ENCODE measurements at regions of chr4 and their contacts with region 1.

Region 1: GRCh38 chr4:147943159-147943638 is 211.3 kb downstream of the ARHGAP10 start:
- DNase-seq: peak in 1 of 2 donors; percentile 51
- ATAC-seq: peak; percentile 46 to 70 (median 55)
- H3K4me3 ChIP-seq: peak overlapping the region; percentile 20
- H3K4me3 Mint-ChIP-seq: peak overlapping the region; percentile 64
- H3K27ac ChIP-seq: peak overlapping the region; percentile 81
- H3K27ac Mint-ChIP-seq: peak overlapping the region; percentile 60 to 78
- H3K4me1 ChIP-seq: peaks cover 11% of the 10 kb centered on the region
- H3K4me1 Mint-ChIP-seq: peaks cover 44 to 56% of the 10 kb centered on the region in 2 donors
- H3K27me3 ChIP-seq: no peaks in the 10 kb centered on the region
- H3K27me3 Mint-ChIP-seq: no peaks in the 10 kb centered on the region
- CTCF ChIP-seq: no peak

Region 2: GRCh38 chr4:147799986-147800555 is 143.1 kb before region 1 on chr4:
- intact Hi-C with region 1: loop called (anchors 10 kb)
- DNase-seq: peak; percentile 54 to 89
- ATAC-seq: peak; percentile 93 to 97 (median 94)
- H3K4me3 ChIP-seq: no peak overlapping the region
- H3K4me3 Mint-ChIP-seq: peak overlapping the region; percentile 81
- H3K27ac ChIP-seq: peak overlapping the region; percentile 51
- H3K27ac Mint-ChIP-seq: peak overlapping the region; percentile 84 to 92
- H3K4me1 ChIP-seq: peaks cover 22% of the 10 kb centered on the region
- H3K4me1 Mint-ChIP-seq: peaks cover 52 to 55% of the 10 kb centered on the region in 2 donors
- H3K27me3 ChIP-seq: no peaks in the 10 kb centered on the region
- H3K27me3 Mint-ChIP-seq: peaks cover 17 to 27% of the 10 kb centered on the region in 2 donors
- CTCF ChIP-seq: no peak

Region 3: GRCh38 chr4:147924604-147925412 is 18.4 kb before region 1 on chr4:
- intact Hi-C with region 1: loop called (anchors 1 kb)
- DNase-seq: peak in 1 of 2 donors; percentile 31
- ATAC-seq: no peak
- H3K4me3 ChIP-seq: no peak overlapping the region
- H3K4me3 Mint-ChIP-seq: no peak overlapping the region
- H3K27ac ChIP-seq: no peak overlapping the region
- H3K27ac Mint-ChIP-seq: no peak overlapping the region
- H3K4me1 ChIP-seq: no peaks in the 10 kb centered on the region
- H3K4me1 Mint-ChIP-seq: peaks cover 0 to 5% of the 10 kb centered on the region in 2 donors
- H3K27me3 ChIP-seq: no peaks in the 10 kb centered on the region
- H3K27me3 Mint-ChIP-seq: no peaks in the 10 kb centered on the region
- CTCF ChIP-seq: no peak

Region 4: GRCh38 chr4:148056869-148057268 is 113.7 kb after region 1 on chr4:
- intact Hi-C with region 1: loop called (anchors 5 kb)
- DNase-seq: peak; percentile 41 to 74
- ATAC-seq: peak; percentile 77 to 85 (median 78)
- H3K4me3 ChIP-seq: no peak overlapping the region
- H3K4me3 Mint-ChIP-seq: peak overlapping the region; percentile 49
- H3K27ac ChIP-seq: peak overlapping the region; percentile 9
- H3K27ac Mint-ChIP-seq: peak overlapping the region; percentile 68 to 74
- H3K4me1 ChIP-seq: peaks cover 72% of the 10 kb centered on the region
- H3K4me1 Mint-ChIP-seq: peaks cover 80 to 85% of the 10 kb centered on the region in 2 donors
- H3K27me3 ChIP-seq: no peaks in the 10 kb centered on the region
- H3K27me3 Mint-ChIP-seq: no peaks in the 10 kb centered on the region
- CTCF ChIP-seq: peak; percentile 43

Measured in natural killer cell (primary cell).